ENCODE measurements at regions of chr9 and their contacts with region 1.

Region 1: GRCh38 chr9:72812559-72813111 is 140.2 kb downstream of the ALDH1A1 start:
- DNase-seq: no peak
- H3K4me3 ChIP-seq: no peak overlapping the region
- H3K27ac ChIP-seq: no peak overlapping the region
- H3K4me1 ChIP-seq: peaks cover 0 to 3% (median 0%) of the 10 kb centered on the region in 4 donors
- H3K27me3 ChIP-seq: no peaks in the 10 kb centered on the region
- CTCF ChIP-seq: no peak
- EP300 ChIP-seq: no peak
- POLR2A ChIP-seq: no peak

Region 2: GRCh38 chr9:72592502-72593403 is 219.9 kb before region 1 on chr9:
- intact Hi-C with region 1: loop called (anchors 10 kb)
- DNase-seq: no peak
- H3K4me3 ChIP-seq: no peak overlapping the region
- H3K27ac ChIP-seq: no peak overlapping the region
- H3K4me1 ChIP-seq: peaks cover 7 to 24% (median 21%) of the 10 kb centered on the region in 4 donors
- H3K27me3 ChIP-seq: no peaks in the 10 kb centered on the region
- CTCF ChIP-seq: peak; percentile 77 to 84 (median 83)
- EP300 ChIP-seq: no peak
- POLR2A ChIP-seq: no peak

Region 3: GRCh38 chr9:72661401-72662135 is 151.1 kb before region 1 on chr9:
- intact Hi-C with region 1: no loop called
- DNase-seq: no peak
- H3K4me3 ChIP-seq: no peak overlapping the region
- H3K27ac ChIP-seq: no peak overlapping the region
- H3K4me1 ChIP-seq: no peaks in the 10 kb centered on the region
- H3K27me3 ChIP-seq: no peaks in the 10 kb centered on the region
- CTCF ChIP-seq: no peak
- EP300 ChIP-seq: no peak
- POLR2A ChIP-seq: no peak

Region 4: GRCh38 chr9:72763022-72763421 is 49.6 kb before region 1 on chr9:
- intact Hi-C with region 1: loop called (anchors 5 kb)
- DNase-seq: no peak
- H3K4me3 ChIP-seq: no peak overlapping the region
- H3K27ac ChIP-seq: no peak overlapping the region
- H3K4me1 ChIP-seq: no peaks in the 10 kb centered on the region
- H3K27me3 ChIP-seq: no peaks in the 10 kb centered on the region
- CTCF ChIP-seq: no peak
- EP300 ChIP-seq: no peak
- POLR2A ChIP-seq: no peak

Region 5: DNA sequence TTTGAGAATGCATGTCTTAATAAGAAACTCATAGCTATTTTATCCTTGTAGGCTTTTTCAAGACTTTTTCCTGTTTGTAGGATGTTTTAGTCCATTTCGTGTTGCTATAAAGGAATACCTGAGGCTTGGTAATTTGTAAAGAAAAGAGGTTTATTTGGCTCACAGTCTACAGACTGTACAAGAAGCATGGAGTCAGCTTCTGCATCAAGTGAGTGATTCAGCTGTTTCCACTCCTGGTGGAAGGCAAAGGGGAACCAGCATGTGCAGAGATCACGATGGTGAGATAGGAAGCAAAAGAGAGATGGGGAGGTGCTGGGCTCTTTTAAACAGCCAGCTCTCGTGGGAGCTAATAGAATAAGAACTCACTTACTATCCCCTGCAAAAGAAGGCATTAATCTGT is 37.1 kb before region 1 on chr9:
- intact Hi-C with region 1: no loop called
- DNase-seq: no peak
- H3K4me3 ChIP-seq: no peak overlapping the region
- H3K27ac ChIP-seq: no peak overlapping the region
- H3K4me1 ChIP-seq: no peaks in the 10 kb centered on the region
- H3K27me3 ChIP-seq: no peaks in the 10 kb centered on the region
- CTCF ChIP-seq: no peak
- EP300 ChIP-seq: no peak
- POLR2A ChIP-seq: no peak

Region 6: GRCh38 chr9:72788966-72789735 is 23.5 kb before region 1 on chr9:
- intact Hi-C with region 1: no loop called
- DNase-seq: no peak
- H3K4me3 ChIP-seq: no peak overlapping the region
- H3K27ac ChIP-seq: no peak overlapping the region
- H3K4me1 ChIP-seq: peaks cover 0 to 5% (median 0%) of the 10 kb centered on the region in 4 donors
- H3K27me3 ChIP-seq: no peaks in the 10 kb centered on the region
- CTCF ChIP-seq: no peak
- EP300 ChIP-seq: no peak
- POLR2A ChIP-seq: no peak